GM10248 (cell line): ENCODE measurements at regions of chr12 and their contacts with region 1.

Region 1: DNA sequence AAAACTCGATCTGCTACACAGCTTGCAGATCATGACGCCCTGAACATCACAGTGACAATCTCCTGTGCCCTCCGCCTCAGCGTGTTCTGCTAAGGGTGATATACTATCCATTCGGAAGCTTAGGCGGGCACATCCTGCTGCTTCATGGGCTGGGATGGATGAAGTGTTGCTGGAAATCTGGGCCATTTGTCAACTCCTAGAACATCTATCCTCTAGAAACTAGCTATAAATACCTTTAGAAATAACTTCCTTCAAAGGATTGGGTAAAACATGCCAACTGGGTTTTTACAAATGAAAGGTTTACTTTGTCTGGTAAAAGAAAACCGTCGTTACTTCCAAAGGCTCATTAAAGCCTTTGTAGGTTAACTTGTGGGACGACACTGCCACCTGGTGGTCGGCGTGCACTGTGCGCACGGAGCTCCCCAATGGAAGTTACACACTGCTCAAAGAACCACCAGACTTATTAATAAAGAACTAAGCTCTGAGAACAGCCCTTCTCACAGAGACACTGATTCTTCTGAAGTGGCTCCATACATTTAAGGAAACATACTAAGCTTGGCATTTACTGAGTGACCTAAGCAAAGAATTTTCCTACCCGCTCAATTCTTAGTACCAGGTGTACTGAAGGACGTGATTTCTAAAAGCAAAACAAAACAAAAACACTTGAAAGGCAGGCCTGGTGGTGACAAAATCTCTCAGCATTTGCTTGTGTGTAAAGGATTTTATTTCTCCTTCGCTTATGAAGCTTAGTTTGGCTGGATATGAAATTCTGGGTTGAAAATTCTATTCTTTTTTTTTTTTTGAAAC is 21.6 kb upstream of the CACNA2D4 start:
- DNase-seq: peak; percentile 83
- CTCF ChIP-seq: peak; percentile 90

Region 2: GRCh38 chr12:1650260-1650977 is 289.6 kb before region 1 on chr12:
- CTCF ChIA-PET with region 1: interaction called, 67 read pairs
- POLR2A ChIA-PET with region 1: no interaction called
- DNase-seq: no peak
- CTCF ChIP-seq: no peak

Region 3: DNA sequence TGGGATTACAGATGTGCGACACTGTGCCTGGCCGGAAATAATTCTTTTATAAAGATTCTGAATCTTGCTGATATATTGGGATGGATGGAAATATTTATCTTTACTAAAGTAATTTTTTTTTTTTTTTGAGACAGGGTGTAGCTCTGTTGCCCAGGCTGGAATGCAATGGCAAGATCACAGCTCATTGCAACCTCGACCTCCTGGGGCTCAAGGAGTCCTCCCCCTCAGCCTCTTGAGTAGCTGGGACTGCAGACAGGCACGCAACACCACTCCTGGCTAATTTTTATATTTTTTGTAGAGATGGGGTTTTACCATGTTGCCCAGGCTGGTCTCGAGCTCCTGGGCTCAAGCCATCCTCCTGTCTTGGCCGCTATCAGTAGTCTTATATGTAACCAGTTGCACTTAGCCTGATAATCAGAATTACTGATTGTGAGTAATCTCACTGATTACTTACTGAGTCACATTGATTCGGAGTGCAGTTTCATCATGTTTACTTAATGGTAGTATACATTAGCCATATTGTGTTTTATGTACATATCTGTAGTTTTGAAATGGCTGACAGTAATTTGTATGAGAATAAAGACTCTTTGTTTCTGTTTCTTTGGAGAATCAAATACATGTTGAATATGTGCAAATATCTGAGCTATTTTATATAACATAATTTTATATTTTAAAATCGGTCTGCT is 170.1 kb before region 1 on chr12:
- CTCF ChIA-PET with region 1: interaction called, 15 read pairs
- POLR2A ChIA-PET with region 1: no interaction called
- DNase-seq: no peak
- CTCF ChIP-seq: no peak

Region 4: DNA sequence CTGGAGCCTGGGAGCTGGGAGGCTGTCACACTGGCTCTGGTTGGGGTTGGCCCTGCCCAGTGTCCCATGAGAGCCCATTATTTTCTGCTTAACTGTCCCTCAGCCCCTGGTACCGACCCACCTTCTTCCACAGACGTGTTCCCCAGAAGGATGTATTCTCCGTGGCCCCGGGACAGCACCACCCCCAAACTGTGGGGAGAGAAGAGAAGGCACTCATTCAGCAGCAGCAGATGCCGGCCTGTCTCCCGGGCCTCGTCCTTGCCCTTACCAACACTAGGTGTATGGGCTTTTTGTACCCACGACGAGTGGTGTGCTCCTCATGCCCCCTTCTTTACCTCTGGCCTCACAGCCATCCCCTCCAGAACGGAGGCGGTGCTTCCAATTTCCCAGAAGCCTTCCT is 81.5 kb before region 1 on chr12:
- CTCF ChIA-PET with region 1: interaction called, 10 read pairs
- POLR2A ChIA-PET with region 1: no interaction called
- DNase-seq: no peak
- CTCF ChIP-seq: no peak

Region 5: GRCh38 chr12:1956716-1957115 is 16.7 kb after region 1 on chr12:
- CTCF ChIA-PET with region 1: interaction called, 28 read pairs
- POLR2A ChIA-PET with region 1: no interaction called
- DNase-seq: no peak
- CTCF ChIP-seq: no peak